ENCODE measurements at regions of chr2 and their contacts with region 1.

Region 1: DNA sequence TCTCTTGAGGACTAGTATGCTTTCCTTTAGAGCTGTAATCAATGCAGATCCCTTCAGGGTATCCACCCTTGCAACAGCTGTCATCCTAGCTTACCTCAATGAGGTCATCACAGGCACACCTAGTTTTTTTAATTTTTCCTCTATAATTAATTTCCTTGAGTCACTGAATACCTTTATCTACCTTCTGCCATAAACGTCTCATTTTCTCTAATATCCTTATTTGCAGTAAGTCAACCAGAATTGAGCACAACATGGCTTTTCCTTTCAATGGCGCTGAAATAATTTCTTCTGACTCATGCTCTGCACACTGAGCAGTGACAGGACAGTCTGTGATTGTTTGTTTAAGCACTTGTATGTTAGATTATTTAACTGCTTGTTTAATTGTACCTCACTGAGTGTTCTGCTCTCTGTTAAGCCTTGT is 49.4 kb downstream of the ETAA1 start:
- DNase-seq: no peak
- H3K4me3 Mint-ChIP-seq: no peak overlapping the region
- H3K27ac Mint-ChIP-seq: peak overlapping the region; percentile 7
- H3K4me1 Mint-ChIP-seq: peaks cover 29% of the 10 kb centered on the region
- H3K27me3 Mint-ChIP-seq: no peaks in the 10 kb centered on the region
- CTCF ChIP-seq: no peak

Region 2: DNA sequence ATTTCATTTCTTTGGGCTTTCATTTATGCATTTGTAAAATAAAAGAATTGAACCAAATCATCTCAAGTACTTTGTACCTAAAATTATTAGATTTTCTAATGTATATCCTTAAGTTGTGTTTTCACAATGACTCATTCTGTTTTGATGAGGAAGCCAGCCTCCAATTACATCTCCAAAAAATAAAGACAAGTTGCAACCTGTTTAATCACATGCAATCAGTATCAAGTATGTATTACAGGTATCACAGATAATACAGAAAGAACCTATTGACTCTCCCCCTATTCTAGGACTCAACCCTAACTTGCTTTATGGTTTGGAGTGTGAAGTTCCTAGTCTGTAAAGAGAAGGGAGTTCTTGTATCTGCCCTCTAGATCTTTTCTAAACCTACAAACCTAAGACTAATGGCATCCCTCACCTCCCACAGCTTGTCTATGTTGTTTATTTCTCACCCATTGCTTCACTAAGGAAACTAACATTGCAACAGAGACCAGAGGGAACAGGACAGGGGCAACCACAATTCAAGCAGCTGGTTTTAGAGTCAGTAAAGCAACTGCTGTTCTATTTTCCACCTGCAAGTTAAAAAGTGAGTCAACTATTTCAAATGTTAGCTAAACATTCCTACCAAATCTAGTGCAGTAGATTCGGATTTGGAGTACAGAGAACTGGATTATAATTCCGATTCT is 190.4 kb before region 1 on chr2:
- CTCF ChIA-PET with region 1: no interaction called
- intact Hi-C with region 1: no loop called
- DNase-seq: no peak
- H3K4me3 Mint-ChIP-seq: no peak overlapping the region
- H3K27ac Mint-ChIP-seq: peak overlapping the region; percentile 54
- H3K4me1 Mint-ChIP-seq: peaks cover 19% of the 10 kb centered on the region
- H3K27me3 Mint-ChIP-seq: no peaks in the 10 kb centered on the region
- CTCF ChIP-seq: no peak

Region 3: DNA sequence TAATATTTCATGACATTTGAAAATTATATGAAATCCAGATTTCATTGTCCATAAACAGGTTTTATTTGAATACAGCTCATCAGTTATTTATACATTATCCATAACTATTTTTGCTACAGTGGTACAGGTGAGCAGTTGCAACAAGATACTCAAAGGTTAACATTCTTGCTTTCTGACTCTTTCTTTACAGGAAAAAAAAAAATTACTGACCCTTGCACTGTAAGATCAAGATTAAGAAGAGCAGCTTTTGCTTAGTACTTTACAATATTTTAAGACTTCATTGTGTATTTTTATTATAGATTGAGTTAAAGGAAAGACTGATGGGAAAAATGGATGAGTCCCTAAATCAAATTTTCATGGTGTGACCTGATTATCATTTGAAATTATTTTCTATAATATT is 38.2 kb before region 1 on chr2:
- CTCF ChIA-PET with region 1: interaction called, 3 read pairs
- intact Hi-C with region 1: loop called (anchors 2 kb)
- DNase-seq: no peak
- H3K4me3 Mint-ChIP-seq: no peak overlapping the region
- H3K27ac Mint-ChIP-seq: no peak overlapping the region
- H3K4me1 Mint-ChIP-seq: peaks cover 28% of the 10 kb centered on the region
- H3K27me3 Mint-ChIP-seq: no peaks in the 10 kb centered on the region
- CTCF ChIP-seq: no peak

Measured in Calu3 (cell line).